AG04449 (cell line): ENCODE measurements at regions of chr17 and their contacts with region 1.

Region 1: GRCh38 chr17:41322094-41322902 is 6.8 kb upstream of the KRTAP17-1 start:
- DNase-seq: peak; percentile 24
- H3K4me3 ChIP-seq: no peak overlapping the region
- CTCF ChIP-seq: peak; percentile 72

Region 2: GRCh38 chr17:40909351-40909750 is 412.9 kb before region 1 on chr17:
- CTCF ChIA-PET with region 1: interaction called, 15 read pairs
- POLR2A ChIA-PET with region 1: no interaction called
- DNase-seq: peak; percentile 93
- H3K4me3 ChIP-seq: no peak overlapping the region
- CTCF ChIP-seq: peak; percentile 64

Region 3: DNA sequence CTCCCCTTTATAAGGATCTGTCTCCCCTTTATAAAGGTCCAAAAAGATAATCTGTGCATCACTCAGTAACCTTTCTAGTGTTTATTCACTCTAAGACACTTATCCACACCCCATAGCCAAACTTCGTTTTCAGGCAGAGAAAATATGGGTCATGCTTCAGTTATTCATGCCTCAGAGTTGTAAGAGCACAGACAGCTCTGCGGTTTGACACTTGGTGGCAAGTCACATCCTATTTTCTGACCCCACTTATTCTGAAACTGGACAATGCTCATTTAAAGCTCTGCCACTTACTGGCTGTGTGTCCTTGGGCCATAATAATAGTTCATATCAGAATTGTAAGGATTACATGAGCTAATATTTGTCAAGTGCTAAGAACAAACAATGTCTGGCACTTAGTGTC is 273.2 kb before region 1 on chr17:
- CTCF ChIA-PET with region 1: interaction called, 10 read pairs
- POLR2A ChIA-PET with region 1: no interaction called
- DNase-seq: no peak
- H3K4me3 ChIP-seq: no peak overlapping the region
- CTCF ChIP-seq: no peak

Region 4: DNA sequence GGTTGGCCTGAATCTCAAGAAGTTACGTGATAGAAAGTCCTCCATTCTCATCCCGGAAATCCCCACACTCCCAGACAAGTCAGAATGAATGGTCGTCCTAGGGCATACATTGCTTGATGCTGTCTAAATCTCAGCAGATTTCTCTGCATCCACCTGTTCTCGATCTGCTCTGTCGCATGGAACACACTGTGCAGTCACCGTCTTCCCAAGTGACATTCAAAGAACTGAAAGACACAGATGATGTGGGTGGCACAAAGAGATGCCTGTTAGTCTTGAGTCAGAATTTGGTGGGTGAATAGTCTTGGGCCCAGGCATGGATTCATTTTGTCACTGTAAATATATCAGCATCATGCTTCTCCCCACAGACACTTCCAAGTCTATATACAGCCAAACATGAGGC is 90.6 kb before region 1 on chr17:
- CTCF ChIA-PET with region 1: no interaction called
- POLR2A ChIA-PET with region 1: no interaction called
- DNase-seq: no peak
- H3K4me3 ChIP-seq: no peak overlapping the region
- CTCF ChIP-seq: no peak

Region 5: DNA sequence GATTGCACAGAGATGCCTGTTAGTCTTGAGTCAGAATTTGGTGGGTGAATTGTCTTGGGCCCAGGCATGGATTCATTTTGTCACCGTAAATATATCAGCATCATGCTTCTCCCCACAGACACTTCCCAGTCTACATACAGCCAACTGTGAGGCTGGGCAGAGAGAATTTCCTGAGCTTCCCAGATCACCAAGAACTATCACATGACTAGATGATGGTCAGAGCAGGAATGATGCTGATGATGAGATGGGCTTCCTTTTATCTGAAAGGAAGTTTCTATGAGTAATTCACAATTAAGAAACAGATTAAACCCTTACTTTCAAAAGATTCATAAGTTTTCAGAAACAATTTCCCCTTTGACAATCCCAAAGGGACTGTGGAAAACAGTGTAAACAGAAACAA is 67.4 kb before region 1 on chr17:
- CTCF ChIA-PET with region 1: no interaction called
- POLR2A ChIA-PET with region 1: no interaction called
- DNase-seq: no peak
- H3K4me3 ChIP-seq: no peak overlapping the region
- CTCF ChIP-seq: no peak

Region 6: GRCh38 chr17:41301916-41302901 is 20.1 kb before region 1 on chr17 and contains the start of gene KRTAP29-1:
- CTCF ChIA-PET with region 1: interaction called, 13 read pairs
- POLR2A ChIA-PET with region 1: no interaction called
- DNase-seq: no peak
- H3K4me3 ChIP-seq: no peak within 1 kb of the TSS
- CTCF ChIP-seq: no peak

Region 7: DNA sequence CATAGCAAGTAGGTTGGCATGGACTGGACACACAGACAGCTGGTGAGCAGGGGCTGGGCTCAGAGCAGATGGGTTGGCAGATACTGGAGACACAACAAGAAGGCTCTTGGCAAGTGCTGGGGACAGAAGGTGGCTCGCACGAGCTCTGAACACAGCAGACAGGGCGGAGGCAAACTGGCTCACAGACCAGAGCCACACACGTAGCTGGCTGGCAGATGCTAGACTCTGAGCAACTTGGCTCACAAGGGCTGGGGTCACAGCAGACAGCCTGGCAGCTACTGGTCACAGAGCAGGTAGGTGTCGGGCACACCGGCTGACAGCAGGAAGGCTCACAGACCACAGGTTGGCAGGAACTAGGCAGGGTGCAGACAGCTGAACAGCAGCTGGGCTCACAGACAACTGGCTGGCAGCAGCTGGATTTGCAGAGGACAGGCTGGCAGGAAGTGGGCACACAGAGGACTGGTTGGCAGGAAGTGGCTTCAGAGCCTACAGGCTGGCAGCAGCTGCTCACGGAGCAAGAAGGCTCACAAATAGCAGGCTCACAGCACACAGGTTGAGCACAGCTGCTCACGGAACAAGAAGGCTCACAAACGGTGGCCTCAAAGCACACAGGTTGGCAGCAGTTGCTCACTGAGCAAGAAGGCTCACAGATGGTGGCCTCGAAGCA is 13.9 kb before region 1 on chr17:
- CTCF ChIA-PET with region 1: interaction called, 90 read pairs
- POLR2A ChIA-PET with region 1: no interaction called
- DNase-seq: no peak
- H3K4me3 ChIP-seq: no peak overlapping the region
- CTCF ChIP-seq: no peak

Region 8: DNA sequence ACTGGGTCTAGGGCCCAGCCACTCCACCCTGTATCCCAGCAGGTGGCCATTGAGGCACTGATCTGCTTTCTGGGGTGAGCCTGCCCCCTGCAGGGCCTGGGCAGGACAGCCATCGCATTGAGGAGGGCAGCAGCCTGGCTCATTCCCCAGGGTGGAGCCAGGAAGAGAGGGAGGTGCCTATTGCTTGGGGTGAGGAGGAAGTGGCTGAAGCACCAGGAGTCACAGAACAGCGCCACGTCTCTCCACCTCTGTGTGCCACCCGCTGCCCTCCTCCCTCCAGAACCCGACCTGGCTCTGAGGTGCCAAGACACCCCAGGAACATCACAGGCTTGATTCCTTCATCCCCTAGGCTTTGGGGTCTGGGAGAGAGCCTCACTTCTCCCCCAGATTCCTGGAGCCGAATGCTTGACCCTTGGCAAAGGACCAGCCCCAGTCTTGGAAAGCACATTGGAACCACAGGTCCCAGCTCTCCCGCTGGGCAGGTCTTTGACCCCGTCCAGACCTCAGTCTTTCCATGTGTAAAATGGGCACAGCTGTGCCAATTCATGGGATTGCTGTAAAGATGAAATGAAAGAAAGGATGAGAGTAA is 174.6 kb after region 1 on chr17:
- CTCF ChIA-PET with region 1: interaction called, 12 read pairs
- POLR2A ChIA-PET with region 1: no interaction called
- DNase-seq: peak; percentile 37
- H3K4me3 ChIP-seq: no peak overlapping the region
- CTCF ChIP-seq: peak; percentile 96